Esophagus squamous epithelium (tissue), 5 donors: ENCODE measurements at regions of chr7 and their contacts with region 1.

Region 1: GRCh38 chr7:36742911-36743775 is 18.8 kb upstream of the AOAH start:
- DNase-seq: no peak
- H3K4me3 ChIP-seq: no peak overlapping the region
- H3K27ac ChIP-seq: no peak overlapping the region
- H3K4me1 ChIP-seq: no peaks in the 10 kb centered on the region
- H3K27me3 ChIP-seq: no peaks in the 10 kb centered on the region
- CTCF ChIP-seq: no peak
- POLR2A ChIP-seq: no peak

Region 2: DNA sequence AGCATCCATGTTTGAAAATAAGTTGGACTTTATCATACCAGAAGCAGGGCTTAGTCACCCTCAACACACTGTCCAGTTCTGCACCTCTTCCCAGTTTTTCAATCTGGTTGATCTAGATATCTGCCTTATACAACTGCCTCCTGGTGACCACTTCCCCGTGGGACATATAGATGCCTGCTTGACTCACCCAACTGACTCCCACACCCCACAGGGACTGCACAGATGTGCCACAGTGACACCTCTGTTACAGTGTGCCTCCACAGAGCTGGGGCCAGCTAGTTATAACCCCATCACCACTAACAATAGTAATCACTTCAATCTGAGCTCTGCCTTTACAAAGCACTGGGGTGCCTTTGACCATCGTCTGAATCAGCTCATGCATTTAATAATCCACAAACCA is 63.7 kb after region 1 on chr7:
- intact Hi-C with region 1: loop called (anchors 10 kb)
- DNase-seq: no peak
- H3K4me3 ChIP-seq: no peak overlapping the region
- H3K27ac ChIP-seq: no peak overlapping the region
- H3K4me1 ChIP-seq: no peaks in the 10 kb centered on the region
- H3K27me3 ChIP-seq: no peaks in the 10 kb centered on the region
- CTCF ChIP-seq: no peak
- POLR2A ChIP-seq: no peak

Region 3: DNA sequence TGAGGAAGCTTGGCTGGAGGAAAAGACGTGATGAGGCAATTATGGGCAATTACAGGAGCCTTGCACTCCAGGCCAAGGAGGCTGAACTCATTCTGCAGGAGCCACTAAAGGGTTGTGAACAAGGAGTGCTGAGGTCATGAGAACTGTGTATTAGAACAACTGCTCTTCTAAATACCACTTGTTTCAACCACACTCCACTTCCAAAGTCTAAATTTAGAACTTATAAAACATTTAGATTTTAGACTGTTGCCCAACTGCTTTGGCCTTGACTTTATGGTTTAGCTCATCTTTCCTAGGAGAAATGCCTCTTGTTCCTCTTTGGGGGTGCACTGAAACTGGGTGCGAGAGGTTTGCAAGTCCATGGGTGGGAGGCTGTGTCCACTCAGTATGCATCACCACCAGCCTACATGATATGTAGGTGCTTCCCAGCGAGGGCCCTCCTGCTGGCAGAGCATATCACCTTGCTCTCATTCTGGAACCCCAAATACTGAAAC is 180.8 kb after region 1 on chr7:
- intact Hi-C with region 1: no loop called
- DNase-seq: no peak
- H3K4me3 ChIP-seq: no peak overlapping the region
- H3K27ac ChIP-seq: no peak overlapping the region
- H3K4me1 ChIP-seq: peaks cover 0 to 8% (median 0%) of the 10 kb centered on the region in 3 donors
- H3K27me3 ChIP-seq: no peaks in the 10 kb centered on the region
- CTCF ChIP-seq: no peak
- POLR2A ChIP-seq: no peak